A673 (cell line): ENCODE measurements at regions of chr1 and their contacts with region 1.

Region 1: GRCh38 chr1:231528172-231529029 is at the start of gene TSNAX:
- DNase-seq: peak; percentile 96
- H3K4me3 ChIP-seq: peak within 1 kb of the TSS; percentile 87
- H3K27ac ChIP-seq: peak within 1 kb of the TSS; percentile 93
- H3K4me1 ChIP-seq: no peaks in the 10 kb centered on the region
- H3K27me3 ChIP-seq: no peaks in the 10 kb centered on the region
- CTCF ChIP-seq: no peak
- total RNA-seq, gene TSNAX: 56.1 and 60.0 TPM in 2 replicates

Region 2: GRCh38 chr1:231421993-231422764 is 106.2 kb before region 1 on chr1 and contains the start of gene EGLN1:
- CTCF ChIA-PET with region 1: no interaction called
- POLR2A ChIA-PET with region 1: no interaction called
- intact Hi-C with region 1: loop called (anchors 2 kb)
- DNase-seq: peak; percentile 91
- H3K4me3 ChIP-seq: peak within 1 kb of the TSS; percentile 80
- H3K27ac ChIP-seq: peak within 1 kb of the TSS; percentile 90
- H3K4me1 ChIP-seq: peaks cover 27% of the 10 kb centered on the region
- H3K27me3 ChIP-seq: no peaks in the 10 kb centered on the region
- CTCF ChIP-seq: peak; percentile 35
- total RNA-seq, gene EGLN1: 29.5 and 30.4 TPM in 2 replicates

Region 3: DNA sequence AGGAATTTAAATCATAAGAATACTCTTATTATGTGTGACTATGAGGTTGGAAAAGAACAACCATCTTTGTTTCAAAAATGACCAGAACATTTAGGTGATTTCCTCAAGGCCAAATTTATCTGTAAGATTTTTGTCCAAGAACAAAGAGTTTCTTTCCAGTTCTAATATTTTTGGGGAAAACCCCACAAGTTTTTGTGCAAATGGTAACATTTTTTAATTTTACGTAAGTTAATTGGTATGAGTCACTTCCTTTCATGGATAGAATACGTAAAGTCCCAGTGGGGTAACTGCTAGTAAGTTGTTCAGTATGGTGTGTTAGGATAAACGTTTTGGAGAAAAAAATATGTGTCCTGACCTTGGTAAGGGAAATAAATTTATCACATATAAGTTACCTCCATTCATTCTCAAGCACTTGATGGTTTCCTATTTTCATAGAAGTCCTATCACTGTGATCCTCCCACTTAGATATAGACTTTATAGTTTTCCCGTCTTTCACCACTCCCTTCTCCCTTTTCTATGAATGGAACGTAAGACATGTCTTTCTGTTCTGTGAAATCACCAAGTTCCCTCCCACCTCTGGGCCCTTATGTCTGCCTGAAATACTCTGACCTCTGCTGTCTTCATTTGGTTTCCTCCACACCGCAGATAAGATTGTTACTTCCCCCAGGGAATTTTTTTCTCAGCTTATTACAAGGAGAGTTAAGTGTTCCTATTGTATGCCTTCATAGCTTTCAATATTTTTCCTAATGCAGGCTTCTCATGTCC is 34.8 kb before region 1 on chr1:
- CTCF ChIA-PET with region 1: no interaction called
- POLR2A ChIA-PET with region 1: no interaction called
- intact Hi-C with region 1: loop called (anchors 5 kb)
- DNase-seq: peak; percentile 78
- H3K4me3 ChIP-seq: no peak overlapping the region
- H3K27ac ChIP-seq: peak overlapping the region; percentile 4
- H3K4me1 ChIP-seq: peaks cover 8% of the 10 kb centered on the region
- H3K27me3 ChIP-seq: no peaks in the 10 kb centered on the region
- CTCF ChIP-seq: no peak